CD4-positive, alpha-beta memory T cell (primary cell): ENCODE measurements at regions of chr3 and their contacts with region 1.

Region 1: DNA sequence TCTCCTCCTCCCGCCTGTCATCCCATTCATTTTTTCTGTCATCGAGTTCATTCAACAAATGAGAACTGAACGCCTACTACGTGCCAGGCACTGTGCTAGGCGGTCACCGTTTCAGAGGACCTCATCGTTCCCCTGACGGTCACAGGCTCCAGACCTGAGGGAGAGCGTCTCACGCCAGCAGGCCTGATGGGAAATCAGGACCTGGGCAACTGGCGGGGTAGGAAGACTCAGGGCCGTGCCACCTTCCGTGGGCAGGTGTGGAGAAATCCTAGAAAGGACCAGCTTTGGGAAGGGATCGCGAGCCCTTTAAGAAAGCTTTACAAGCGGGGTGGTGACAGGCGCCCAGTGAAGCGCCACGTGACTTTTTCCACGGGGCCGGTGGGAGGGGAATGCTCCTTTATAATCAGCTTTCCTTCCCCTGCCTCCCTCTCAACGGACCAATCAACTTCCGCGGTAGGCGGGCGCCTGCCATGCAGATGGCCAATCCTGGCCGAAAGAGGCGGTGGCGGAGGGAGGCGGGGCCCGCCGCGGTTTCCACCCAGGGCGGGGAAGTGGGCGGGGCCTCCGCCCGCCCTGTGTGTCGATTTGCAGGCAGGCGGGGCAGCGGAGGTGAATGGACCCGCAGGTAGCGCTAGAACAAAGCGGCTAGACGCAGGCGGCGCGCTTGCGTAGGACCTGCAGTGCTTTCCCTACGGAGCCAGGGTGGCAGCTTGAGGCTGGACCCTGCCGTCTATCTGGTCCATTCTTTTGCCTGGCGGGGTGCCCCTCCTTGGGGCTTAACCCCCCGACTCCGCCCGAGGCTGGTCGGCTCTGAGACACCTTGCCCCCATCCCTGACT is 816 bp upstream of the DUSP7 start:
- DNase-seq: peak; percentile 99 to 100 (median 99)
- H3K4me3 ChIP-seq: peak overlapping the region; percentile 90 to 97
- H3K4me3 Mint-ChIP-seq: peak overlapping the region; percentile 83 to 96 (median 92)
- H3K27ac ChIP-seq: peak overlapping the region; percentile 82
- H3K27ac Mint-ChIP-seq: peak overlapping the region; percentile 92 to 98 (median 96)
- H3K4me1 ChIP-seq: peaks cover 41% of the 10 kb centered on the region
- H3K4me1 Mint-ChIP-seq: peaks cover 20 to 44% (median 30%) of the 10 kb centered on the region in 4 donors
- H3K27me3 ChIP-seq: no peaks in the 10 kb centered on the region
- H3K27me3 Mint-ChIP-seq: no peaks in the 10 kb centered on the region

Region 2: GRCh38 chr3:51830836-51831385 is 226.3 kb before region 1 on chr3:
- CTCF ChIA-PET with region 1: no interaction called
- POLR2A ChIA-PET with region 1: no interaction called
- intact Hi-C with region 1: no loop called
- DNase-seq: no peak
- H3K4me3 ChIP-seq: no peak overlapping the region
- H3K4me3 Mint-ChIP-seq: peak overlapping the region in 1 of 8 donors; percentile 48
- H3K27ac ChIP-seq: no peak overlapping the region
- H3K27ac Mint-ChIP-seq: no peak overlapping the region
- H3K4me1 ChIP-seq: no peaks in the 10 kb centered on the region
- H3K4me1 Mint-ChIP-seq: peaks cover 0 to 2% (median 0%) of the 10 kb centered on the region in 4 donors
- H3K27me3 ChIP-seq: peaks cover 3% of the 10 kb centered on the region
- H3K27me3 Mint-ChIP-seq: peaks cover 21 to 25% of the 10 kb centered on the region in 2 donors

Region 3: GRCh38 chr3:51974963-51975851 is 82.0 kb before region 1 on chr3 and contains the start of gene ABHD14A:
- CTCF ChIA-PET with region 1: interaction called, 4 read pairs
- POLR2A ChIA-PET with region 1: interaction called, 16 read pairs
- intact Hi-C with region 1: no loop called
- DNase-seq: peak; percentile 75 to 80 (median 76)
- H3K4me3 ChIP-seq: peak within 1 kb of the TSS; percentile 81 to 95
- H3K4me3 Mint-ChIP-seq: peak within 1 kb of the TSS; percentile 90 to 99 (median 96)
- H3K27ac ChIP-seq: peak within 1 kb of the TSS; percentile 78
- H3K27ac Mint-ChIP-seq: peak within 1 kb of the TSS; percentile 68 to 98 (median 96)
- H3K4me1 ChIP-seq: peaks cover 32% of the 10 kb centered on the region
- H3K4me1 Mint-ChIP-seq: peaks cover 28 to 53% (median 41%) of the 10 kb centered on the region in 4 donors
- H3K27me3 ChIP-seq: no peaks in the 10 kb centered on the region
- H3K27me3 Mint-ChIP-seq: no peaks in the 10 kb centered on the region
- total RNA-seq, gene ABHD14A: 23.7 to 24.5 TPM

Region 4: DNA sequence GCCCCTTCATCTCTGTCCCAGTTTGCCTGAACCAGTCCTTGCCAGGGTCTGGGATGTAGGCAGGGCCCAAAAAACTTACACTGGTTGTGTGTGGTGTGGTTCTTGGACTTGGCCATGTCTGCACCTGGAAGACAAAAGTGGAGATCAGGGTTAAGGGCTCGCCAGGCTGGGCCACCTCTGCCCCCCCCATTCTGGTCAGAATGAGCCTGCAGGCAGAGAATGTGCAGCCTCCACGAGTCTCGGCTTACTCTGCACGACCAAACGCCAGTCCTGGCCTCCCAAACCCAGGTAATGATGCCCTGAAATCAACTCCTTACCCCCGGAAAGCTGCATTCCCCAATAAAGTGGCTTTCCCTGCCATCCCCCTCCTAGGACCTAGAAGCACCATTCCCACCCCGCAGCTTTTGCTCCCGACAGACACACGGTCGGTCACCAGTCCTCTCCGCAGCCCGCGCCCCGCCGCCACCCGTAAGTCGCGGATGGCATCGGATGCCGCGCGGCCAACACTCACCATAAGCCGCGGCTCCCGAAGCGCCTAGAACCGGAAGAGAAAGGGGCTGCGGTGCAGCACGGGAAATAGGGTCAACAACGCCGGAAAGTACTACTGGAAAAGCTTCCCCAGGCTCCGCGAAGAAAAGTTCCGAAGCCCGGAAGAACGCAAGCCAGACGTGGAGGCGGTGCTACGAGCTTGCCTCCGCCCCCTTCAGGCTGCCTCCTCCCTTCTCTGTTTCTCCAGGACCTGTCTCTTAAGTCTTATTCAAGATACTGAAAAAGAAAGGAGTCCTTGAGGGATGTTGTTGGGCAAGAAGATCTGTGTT is 61.6 kb before region 1 on chr3 and contains the start of gene RPL29:
- CTCF ChIA-PET with region 1: interaction called, 97 read pairs
- POLR2A ChIA-PET with region 1: interaction called, 45 read pairs
- intact Hi-C with region 1: no loop called
- DNase-seq: peak; percentile 91 to 94 (median 94)
- H3K4me3 ChIP-seq: peak within 1 kb of the TSS; percentile 94 to 95
- H3K4me3 Mint-ChIP-seq: peak within 1 kb of the TSS; percentile 99 to 100 (median 100)
- H3K27ac ChIP-seq: peak within 1 kb of the TSS; percentile 91
- H3K27ac Mint-ChIP-seq: peak within 1 kb of the TSS; percentile 99 to 100 (median 100)
- H3K4me1 ChIP-seq: peaks cover 30% of the 10 kb centered on the region
- H3K4me1 Mint-ChIP-seq: peaks cover 16 to 45% (median 29%) of the 10 kb centered on the region in 4 donors
- H3K27me3 ChIP-seq: no peaks in the 10 kb centered on the region
- H3K27me3 Mint-ChIP-seq: no peaks in the 10 kb centered on the region
- total RNA-seq, gene RPL29: 1,263 to 1,270 TPM

Region 5: DNA sequence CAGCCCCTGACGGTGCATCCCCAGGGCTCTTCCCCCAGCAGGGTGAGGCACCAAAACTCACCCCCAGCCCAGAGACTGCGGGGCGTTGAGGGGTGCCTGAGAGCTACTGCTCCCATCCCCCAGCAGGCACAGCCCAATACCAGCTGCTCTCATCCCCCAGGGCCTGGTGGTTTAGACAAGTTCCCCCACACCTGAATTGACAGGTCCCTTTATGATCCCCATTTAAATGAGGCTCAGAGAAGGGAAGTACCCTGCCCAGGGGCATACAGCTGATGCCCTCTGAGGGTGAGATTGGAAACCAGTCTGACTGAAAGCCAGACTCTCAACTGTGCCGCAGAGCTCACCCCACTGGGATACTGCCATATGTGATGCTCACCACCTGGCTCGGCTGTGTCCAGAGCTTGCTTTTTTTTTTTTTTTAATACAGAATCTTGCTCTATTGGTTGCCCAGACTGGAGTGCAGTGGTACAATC is 20.9 kb before region 1 on chr3:
- CTCF ChIA-PET with region 1: interaction called, 49 read pairs
- POLR2A ChIA-PET with region 1: interaction called, 8 read pairs
- intact Hi-C with region 1: no loop called
- DNase-seq: no peak
- H3K4me3 ChIP-seq: no peak overlapping the region
- H3K4me3 Mint-ChIP-seq: no peak overlapping the region
- H3K27ac ChIP-seq: no peak overlapping the region
- H3K27ac Mint-ChIP-seq: peak overlapping the region in 1 of 7 donors; percentile 30
- H3K4me1 ChIP-seq: no peaks in the 10 kb centered on the region
- H3K4me1 Mint-ChIP-seq: peaks cover 0 to 6% (median 0%) of the 10 kb centered on the region in 4 donors
- H3K27me3 ChIP-seq: no peaks in the 10 kb centered on the region
- H3K27me3 Mint-ChIP-seq: no peaks in the 10 kb centered on the region

Region 6: DNA sequence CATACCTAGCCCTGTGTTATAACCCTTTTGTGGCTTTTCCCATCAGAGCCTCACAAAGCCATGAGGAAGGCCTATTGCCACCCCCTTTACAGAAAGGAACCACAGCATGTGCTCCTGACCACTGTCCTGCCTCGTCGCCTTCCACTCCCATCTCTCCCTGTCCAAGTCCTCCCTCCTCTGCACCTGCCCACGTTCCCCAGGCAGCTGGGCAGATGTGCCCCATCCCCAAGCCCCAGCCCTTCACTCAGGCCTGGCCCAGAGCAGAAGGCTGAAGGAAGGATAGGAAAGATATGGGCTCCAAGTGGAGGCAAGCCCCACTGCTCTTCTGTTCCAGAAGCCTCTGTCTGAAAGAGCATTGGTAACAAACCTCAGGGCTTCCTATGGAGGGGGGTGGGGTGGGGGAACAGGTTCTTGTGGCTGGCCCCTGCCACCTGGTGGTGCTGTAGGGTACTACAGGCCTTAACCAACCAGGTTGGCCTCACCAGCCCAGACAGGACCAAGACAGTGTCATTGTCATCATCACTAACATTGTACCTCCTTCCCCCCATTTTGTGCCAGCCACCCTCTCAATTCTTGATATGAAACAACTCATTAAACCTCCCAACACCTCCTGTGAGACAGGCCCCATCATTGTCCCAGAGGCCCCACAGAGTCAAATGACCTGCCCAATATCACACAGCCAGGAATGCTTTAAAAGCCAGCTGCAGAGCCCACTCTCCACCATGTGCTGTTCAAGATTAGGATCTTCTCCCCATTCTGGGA is 87.0 kb after region 1 on chr3:
- CTCF ChIA-PET with region 1: interaction called, 5 read pairs
- POLR2A ChIA-PET with region 1: interaction called, 9 read pairs
- intact Hi-C with region 1: loop called (anchors 1 kb)
- DNase-seq: peak; percentile 80 to 91 (median 82)
- H3K4me3 ChIP-seq: no peak overlapping the region
- H3K4me3 Mint-ChIP-seq: no peak overlapping the region
- H3K27ac ChIP-seq: no peak overlapping the region
- H3K27ac Mint-ChIP-seq: peak overlapping the region in 6 of 7 donors; percentile 32 to 82 (median 60)
- H3K4me1 ChIP-seq: peaks cover 6% of the 10 kb centered on the region
- H3K4me1 Mint-ChIP-seq: peaks cover 6 to 11% (median 9%) of the 10 kb centered on the region in 4 donors
- H3K27me3 ChIP-seq: no peaks in the 10 kb centered on the region
- H3K27me3 Mint-ChIP-seq: no peaks in the 10 kb centered on the region

Region 7: GRCh38 chr3:52278510-52279069 is 221.4 kb after region 1 on chr3 and contains the start of gene WDR82:
- CTCF ChIA-PET with region 1: no interaction called
- POLR2A ChIA-PET with region 1: interaction called, 5 read pairs
- intact Hi-C with region 1: loop called (anchors 1 kb)
- DNase-seq: peak; percentile 94 to 97 (median 95)
- H3K4me3 ChIP-seq: peak within 1 kb of the TSS; percentile 58 to 71
- H3K4me3 Mint-ChIP-seq: peak within 1 kb of the TSS; percentile 92 to 99 (median 98)
- H3K27ac ChIP-seq: peak within 1 kb of the TSS; percentile 87
- H3K27ac Mint-ChIP-seq: peak within 1 kb of the TSS; percentile 96 to 100 (median 100)
- H3K4me1 ChIP-seq: peaks cover 76% of the 10 kb centered on the region
- H3K4me1 Mint-ChIP-seq: peaks cover 40 to 87% (median 56%) of the 10 kb centered on the region in 4 donors
- H3K27me3 ChIP-seq: no peaks in the 10 kb centered on the region
- H3K27me3 Mint-ChIP-seq: peaks cover 0 to 3% of the 10 kb centered on the region in 2 donors
- total RNA-seq, gene WDR82: 149 to 150 TPM